Activated CD8-positive, alpha-beta T cell treated with anti-CD3 and anti-CD28 coated beads for 36 hours (primary cell): ENCODE measurements at regions of chr18 and their contacts with region 1.

Region 1: GRCh38 chr18:36828630-36829361 is at the starts of genes KIAA1328 and TPGS2:
- DNase-seq: peak; percentile 90
- ATAC-seq: peak; percentile 92
- H3K4me3 Mint-ChIP-seq: peak within 1 kb of the TSS; percentile 84
- H3K27ac Mint-ChIP-seq: peak within 1 kb of the TSS; percentile 95
- H3K4me1 Mint-ChIP-seq: peaks cover 47% of the 10 kb centered on the region
- H3K27me3 Mint-ChIP-seq: no peaks in the 10 kb centered on the region
- CTCF ChIP-seq: peak; percentile 60
- total RNA-seq, gene KIAA1328: 5.9 to 6.1 TPM
- total RNA-seq, gene TPGS2: 77.0 to 83.1 TPM

Region 2: DNA sequence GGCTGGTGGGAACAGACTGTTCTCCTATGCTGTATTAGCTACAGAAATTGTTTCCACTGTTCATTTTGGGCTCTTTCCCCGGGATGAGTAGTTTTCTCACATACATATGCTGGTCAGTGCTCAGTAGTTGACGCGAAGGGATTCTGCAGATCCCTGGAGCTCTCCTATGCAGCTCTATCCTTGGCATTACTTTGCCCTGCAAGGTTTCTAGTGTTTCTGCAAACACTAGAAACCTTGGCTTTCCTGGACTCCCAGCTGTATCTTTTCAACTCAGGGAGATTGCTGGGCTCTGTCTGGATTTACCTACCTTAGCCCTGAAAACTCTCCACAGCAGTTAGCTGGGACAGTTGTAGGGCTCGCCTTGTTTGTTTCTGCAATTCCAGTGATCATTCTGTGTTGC is 11.0 kb after region 1 on chr18:
- CTCF ChIA-PET with region 1: interaction called, 9 read pairs
- POLR2A ChIA-PET with region 1: interaction called, 13 read pairs
- intact Hi-C with region 1: no loop called
- DNase-seq: no peak
- ATAC-seq: no peak
- H3K4me3 Mint-ChIP-seq: no peak overlapping the region
- H3K27ac Mint-ChIP-seq: no peak overlapping the region
- H3K4me1 Mint-ChIP-seq: peaks cover 3% of the 10 kb centered on the region
- H3K27me3 Mint-ChIP-seq: no peaks in the 10 kb centered on the region
- CTCF ChIP-seq: no peak

Region 3: DNA sequence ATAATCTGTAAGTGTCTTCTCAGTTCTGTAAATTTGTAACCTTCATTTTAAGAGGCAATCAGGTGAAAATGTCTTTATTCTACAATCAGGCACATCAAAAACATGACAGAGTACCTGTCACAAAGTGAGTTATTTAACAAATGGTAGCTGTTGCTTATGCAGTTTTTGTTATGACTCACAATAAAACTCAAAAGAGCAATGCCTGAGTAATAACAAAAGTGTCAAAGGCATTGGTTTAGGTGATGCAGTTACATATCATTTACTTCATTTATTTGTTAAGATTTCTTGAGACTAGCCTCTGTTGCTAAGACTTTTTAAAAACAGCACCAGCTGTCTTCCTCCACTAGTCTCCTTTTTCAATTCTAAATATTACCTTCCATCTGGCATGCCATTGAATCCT is 177.9 kb after region 1 on chr18:
- CTCF ChIA-PET with region 1: no interaction called
- POLR2A ChIA-PET with region 1: no interaction called
- intact Hi-C with region 1: no loop called
- DNase-seq: no peak
- ATAC-seq: peak; percentile 45
- H3K4me3 Mint-ChIP-seq: no peak overlapping the region
- H3K27ac Mint-ChIP-seq: no peak overlapping the region
- H3K4me1 Mint-ChIP-seq: peaks cover 2% of the 10 kb centered on the region
- H3K27me3 Mint-ChIP-seq: no peaks in the 10 kb centered on the region
- CTCF ChIP-seq: no peak